Activated CD8-positive, alpha-beta T cell treated with anti-CD3 and anti-CD28 coated beads, Interleukin-2, amount 10 ng/mL, durations not matched to agents 7 days and 5 days (primary cell): ENCODE measurements at regions of chr2 and their contacts with region 1.

Region 1: GRCh38 chr2:168961450-168962229 is 60.5 kb downstream of the G6PC2 start:
- DNase-seq: peak; percentile 69
- ATAC-seq: peak; percentile 73
- H3K4me3 Mint-ChIP-seq: no peak overlapping the region
- H3K27ac Mint-ChIP-seq: no peak overlapping the region
- H3K4me1 Mint-ChIP-seq: peaks cover 38% of the 10 kb centered on the region
- H3K27me3 Mint-ChIP-seq: no peaks in the 10 kb centered on the region

Region 2: DNA sequence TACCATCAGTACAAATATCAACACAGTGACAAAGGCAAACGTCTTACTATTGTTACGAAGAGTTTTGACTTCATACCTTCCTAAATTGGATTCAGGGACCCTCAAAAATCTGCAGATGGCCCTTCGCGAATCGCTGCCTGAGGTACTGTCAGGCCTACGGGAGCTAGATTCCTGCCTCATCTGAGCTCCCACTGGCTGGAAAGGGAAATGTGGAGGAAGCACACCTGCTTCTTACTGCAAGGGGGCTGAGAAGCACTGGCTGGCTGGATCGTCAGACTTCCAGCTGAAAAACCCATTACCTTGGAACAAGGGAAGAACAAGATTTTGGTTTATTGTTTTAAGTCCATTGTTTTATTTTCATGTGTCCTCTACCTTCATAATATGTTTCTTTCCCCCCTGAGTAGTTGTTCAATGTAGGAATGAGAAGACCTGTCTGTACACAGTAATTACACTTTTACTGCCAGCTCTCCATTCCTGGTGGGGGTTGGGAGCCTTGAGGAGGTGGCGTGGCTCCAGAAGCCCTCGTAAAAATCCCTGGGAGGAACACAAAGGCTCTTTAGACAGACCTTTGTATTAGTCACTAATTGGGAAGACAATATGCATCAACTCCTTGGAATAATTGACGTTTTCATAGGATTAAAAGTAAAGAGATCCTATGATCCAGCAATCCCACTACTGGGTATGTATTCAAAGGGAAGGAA is 283.3 kb before region 1 on chr2:
- CTCF ChIA-PET with region 1: no interaction called
- POLR2A ChIA-PET with region 1: no interaction called
- DNase-seq: no peak
- ATAC-seq: no peak
- H3K4me3 Mint-ChIP-seq: no peak overlapping the region
- H3K27ac Mint-ChIP-seq: no peak overlapping the region
- H3K4me1 Mint-ChIP-seq: no peaks in the 10 kb centered on the region
- H3K27me3 Mint-ChIP-seq: no peaks in the 10 kb centered on the region

Region 3: DNA sequence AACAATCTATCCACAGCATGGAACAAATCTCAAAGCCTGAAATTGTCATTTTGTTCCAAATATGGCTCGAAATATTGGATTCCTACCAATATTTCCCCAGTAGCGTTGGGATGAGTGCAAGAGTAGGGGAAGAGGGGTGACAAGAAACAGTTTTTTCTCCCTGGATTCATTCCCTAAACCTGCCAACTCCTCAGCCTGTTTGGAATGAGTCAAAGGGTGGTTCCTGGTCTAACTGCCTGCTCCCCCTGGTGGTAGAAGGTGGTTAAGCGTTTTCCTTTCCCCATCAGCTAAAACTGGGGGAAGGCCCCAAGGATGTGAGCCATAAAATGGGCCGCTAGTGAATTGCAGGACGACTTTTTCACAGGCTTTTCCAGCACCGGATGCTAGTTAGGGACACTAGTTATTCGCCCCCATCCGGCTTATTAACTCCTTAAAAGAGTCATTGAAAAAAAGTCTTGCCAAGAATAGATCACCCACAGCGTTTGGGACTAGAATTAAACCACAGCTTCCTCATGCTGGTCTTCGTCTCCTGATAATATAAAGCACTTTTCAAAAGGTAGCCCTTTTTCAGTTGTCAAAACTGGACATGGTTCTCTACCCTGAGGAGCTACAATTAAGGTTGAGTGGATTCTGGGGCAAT is 180.2 kb after region 1 on chr2:
- CTCF ChIA-PET with region 1: interaction called, 31 read pairs
- POLR2A ChIA-PET with region 1: no interaction called
- DNase-seq: peak; percentile 73
- ATAC-seq: peak; percentile 57
- H3K4me3 Mint-ChIP-seq: no peak overlapping the region
- H3K27ac Mint-ChIP-seq: no peak overlapping the region
- H3K4me1 Mint-ChIP-seq: no peaks in the 10 kb centered on the region
- H3K27me3 Mint-ChIP-seq: peaks cover 2% of the 10 kb centered on the region

Region 4: DNA sequence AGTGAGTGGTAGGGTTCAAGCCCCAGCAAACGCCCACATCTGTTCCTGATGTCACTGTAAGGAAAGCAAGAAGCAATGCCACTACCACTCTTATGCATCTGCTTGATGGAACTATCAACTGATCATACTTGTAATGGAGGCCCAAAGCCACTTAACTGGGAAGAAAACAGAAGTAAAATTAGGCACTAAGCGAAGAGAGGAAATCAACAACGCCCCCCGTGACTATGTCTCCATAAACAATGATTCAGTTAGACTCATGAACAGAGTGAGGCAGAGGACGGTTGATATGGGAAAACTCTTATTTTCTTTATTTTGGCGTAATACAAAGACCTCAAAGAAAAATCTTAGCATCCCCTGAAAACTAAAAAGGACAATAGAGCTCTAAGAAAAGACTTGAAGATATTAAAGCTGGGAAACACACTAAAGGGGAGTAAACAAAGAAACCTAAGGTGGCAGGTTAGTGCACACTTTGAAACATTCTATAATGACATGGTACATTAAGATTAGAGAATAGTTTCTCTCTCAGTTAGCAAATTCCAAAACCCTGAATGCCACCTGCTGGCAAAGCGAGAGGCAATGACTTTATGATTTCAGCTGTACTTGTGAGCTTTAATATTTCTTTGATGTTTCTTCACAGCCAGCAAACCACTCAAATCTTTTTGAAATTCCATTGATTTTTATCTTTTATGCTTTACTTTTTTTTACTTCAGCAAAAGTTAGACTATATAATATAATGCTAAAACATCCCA is 314.2 kb after region 1 on chr2:
- CTCF ChIA-PET with region 1: no interaction called
- POLR2A ChIA-PET with region 1: no interaction called
- DNase-seq: no peak
- ATAC-seq: no peak
- H3K4me3 Mint-ChIP-seq: no peak overlapping the region
- H3K27ac Mint-ChIP-seq: no peak overlapping the region
- H3K4me1 Mint-ChIP-seq: no peaks in the 10 kb centered on the region
- H3K27me3 Mint-ChIP-seq: peaks cover 32% of the 10 kb centered on the region